Activated naive CD4-positive, alpha-beta T cell treated with anti-CD3 and anti-CD28 coated beads, Interleukin-2, amount 10 ng/mL, durations not matched to agents 7 days and 5 days (primary cell): ENCODE measurements at regions of chr19 and their contacts with region 1.

Region 1: GRCh38 chr19:16062789-16063188 is 13.5 kb upstream of the TPM4 start:
- DNase-seq: peak; percentile 83
- H3K4me3 Mint-ChIP-seq: no peak overlapping the region
- H3K27ac Mint-ChIP-seq: no peak overlapping the region
- H3K4me1 Mint-ChIP-seq: peaks cover 27% of the 10 kb centered on the region
- H3K27me3 Mint-ChIP-seq: peaks cover 35% of the 10 kb centered on the region

Region 2: GRCh38 chr19:16051254-16052025 is 11.3 kb before region 1 on chr19:
- CTCF ChIA-PET with region 1: interaction called, 11 read pairs
- DNase-seq: peak; percentile 59
- H3K4me3 Mint-ChIP-seq: no peak overlapping the region
- H3K27ac Mint-ChIP-seq: no peak overlapping the region
- H3K4me1 Mint-ChIP-seq: peaks cover 7% of the 10 kb centered on the region
- H3K27me3 Mint-ChIP-seq: peaks cover 23% of the 10 kb centered on the region

Region 3: GRCh38 chr19:16095071-16095571 is 32.3 kb after region 1 on chr19:
- CTCF ChIA-PET with region 1: interaction called, 12 read pairs
- DNase-seq: no peak
- H3K4me3 Mint-ChIP-seq: no peak overlapping the region
- H3K27ac Mint-ChIP-seq: peak overlapping the region; percentile 79
- H3K4me1 Mint-ChIP-seq: peaks cover 39% of the 10 kb centered on the region
- H3K27me3 Mint-ChIP-seq: no peaks in the 10 kb centered on the region